ENCODE measurements at regions of chr10 and their contacts with region 1.

Region 1: DNA sequence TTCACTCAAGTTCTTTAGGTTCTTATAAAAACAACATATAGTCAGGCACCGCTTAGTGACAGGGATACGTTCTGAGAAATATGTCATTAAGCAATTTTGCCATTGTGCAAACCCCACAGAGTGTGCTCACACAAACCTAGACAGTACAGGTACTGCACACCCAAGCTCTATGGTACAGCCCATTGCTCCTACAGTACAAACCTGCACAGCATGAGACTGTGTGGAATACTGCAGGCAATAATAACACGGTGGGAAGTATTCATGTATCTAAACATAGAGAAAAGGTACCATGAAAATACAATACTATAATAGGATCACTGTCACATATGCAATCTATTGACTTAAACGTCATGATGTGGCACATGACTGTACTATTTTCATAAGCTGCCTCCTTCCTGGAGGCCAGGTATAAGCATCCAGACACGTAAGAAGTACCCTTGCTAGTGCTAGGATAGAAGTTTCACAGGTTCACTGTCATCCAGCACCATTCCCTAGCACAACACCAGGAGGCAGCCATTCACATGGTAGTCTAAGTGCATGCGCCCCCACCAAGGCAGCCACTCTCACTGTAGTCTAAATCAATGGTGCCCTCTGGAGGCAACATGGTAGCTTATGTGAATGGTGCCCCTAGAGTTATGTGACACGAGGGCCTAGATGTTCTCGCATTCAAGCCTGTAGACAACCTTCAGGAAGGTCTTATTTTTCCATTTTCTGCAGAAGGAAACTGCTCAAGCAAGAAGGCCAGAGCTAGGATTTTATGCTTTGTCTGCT is 98.5 kb downstream of the ARHGAP22 start:
- DNase-seq: no peak
- ATAC-seq: no peak

Region 2: DNA sequence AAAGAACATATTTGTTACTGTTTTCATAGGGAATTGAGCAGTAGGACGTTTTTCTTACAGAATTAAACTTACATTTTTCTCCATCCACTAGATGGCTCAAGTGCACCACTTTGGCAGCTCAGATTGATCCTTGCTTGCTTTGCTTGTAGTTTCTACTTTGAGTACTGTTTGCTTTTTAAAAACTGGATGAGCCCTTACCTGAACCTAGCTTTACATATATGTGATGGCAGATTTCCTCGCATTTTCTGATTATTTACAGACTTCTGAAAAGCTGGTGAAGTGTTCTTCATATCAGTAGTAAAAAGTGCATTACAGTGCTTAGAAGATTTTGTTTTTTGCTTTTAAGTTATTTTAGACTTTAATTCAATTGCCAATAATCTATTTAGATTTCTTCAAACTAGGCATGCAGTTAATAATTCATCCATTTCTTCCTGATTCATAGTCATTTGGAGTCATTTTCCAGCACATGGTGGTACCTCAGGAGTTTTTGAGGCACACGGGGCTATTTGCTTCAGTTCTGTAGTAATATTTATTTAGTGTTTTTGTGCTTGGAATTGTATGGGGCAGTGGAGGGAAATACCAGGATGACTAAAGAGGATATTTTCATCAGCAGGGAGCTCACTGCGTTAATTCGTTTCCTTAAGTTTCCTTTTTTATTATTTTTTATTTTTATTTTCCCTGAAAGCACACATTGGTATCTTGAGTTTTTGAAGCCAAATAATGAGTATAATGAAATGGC is 142.5 kb before region 1 on chr10:
- intact Hi-C with region 1: loop called (anchors 10 kb)
- DNase-seq: no peak
- ATAC-seq: peak; percentile 59 to 71

Region 3: DNA sequence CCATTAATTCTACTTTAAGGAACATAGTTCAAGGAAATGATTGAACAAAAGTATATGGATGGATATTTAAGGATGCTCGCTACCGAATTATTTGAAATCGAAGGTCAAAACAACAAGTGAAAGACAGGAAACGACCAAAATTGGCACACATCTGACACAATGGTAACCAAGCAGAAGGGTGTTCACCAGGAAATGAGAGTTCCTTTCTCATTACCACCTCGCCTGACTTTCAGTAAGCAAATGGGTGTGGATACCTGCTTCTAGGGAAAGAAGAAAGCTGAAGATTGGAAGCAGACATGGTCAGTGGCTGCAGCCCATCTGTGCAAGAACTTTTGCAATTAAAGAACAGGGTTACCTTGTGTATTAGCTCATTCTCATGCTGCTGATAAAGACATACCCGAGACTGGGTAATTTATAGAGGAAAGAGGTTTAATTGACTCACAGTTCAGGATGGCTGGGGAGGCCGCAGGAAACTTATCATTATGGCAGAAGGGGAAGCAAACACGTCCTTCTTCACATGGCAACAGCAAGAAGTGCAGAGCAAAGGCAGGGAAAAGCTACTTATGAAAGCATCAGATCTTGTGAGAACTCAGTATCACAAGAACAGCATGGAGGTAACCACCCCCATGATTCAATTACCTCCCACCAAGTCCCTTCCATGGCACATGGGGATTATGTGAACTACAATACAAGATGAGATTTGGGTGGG is 688.0 kb after region 1 on chr10:
- intact Hi-C with region 1: no loop called
- DNase-seq: no peak
- ATAC-seq: no peak

Measured in left cardiac atrium (tissue), 4 donors.